CD4-positive, alpha-beta T cell (primary cell): ENCODE measurements at regions of chr1 and their contacts with region 1.

Region 1: DNA sequence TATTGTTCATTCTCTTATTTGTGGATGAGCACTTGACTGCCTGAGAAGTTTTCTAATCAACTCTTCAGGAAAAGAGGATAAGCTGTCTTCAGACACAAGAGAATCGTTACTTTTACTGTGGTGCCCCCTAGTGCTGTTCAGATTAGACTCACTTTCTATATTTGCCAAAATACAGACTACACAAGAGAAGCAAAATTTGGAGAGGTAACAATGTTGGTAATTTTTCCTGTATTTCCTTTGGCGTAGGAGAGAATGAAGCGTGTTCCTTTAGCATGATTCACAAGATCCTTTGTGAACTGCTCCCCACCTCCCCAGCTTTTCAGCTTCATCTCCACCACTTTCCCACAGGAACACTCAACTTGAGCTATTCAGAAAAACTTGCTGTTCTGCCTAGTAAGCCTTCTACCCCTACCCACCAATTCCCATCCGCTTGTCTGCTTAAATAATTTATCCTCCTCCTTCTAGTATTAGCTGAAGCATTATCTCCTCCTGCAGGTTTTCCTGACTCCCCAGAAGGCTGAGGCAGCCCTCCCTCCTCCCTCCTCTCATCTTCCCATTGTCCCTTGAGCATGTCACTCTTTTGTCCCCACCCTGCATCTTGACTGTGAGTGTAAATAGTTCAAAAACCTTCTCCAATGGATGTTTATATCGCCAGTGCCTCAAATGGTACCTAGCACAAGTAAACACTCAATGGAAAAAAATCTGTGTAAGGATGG is 4.5 kb downstream of the TNFSF4 start:
- DNase-seq: peak in 4 of 14 experiments; percentile 22 to 51 (median 45)
- ATAC-seq: no peak
- H3K4me3 ChIP-seq: no peak overlapping the region
- H3K4me3 Mint-ChIP-seq: no peak overlapping the region
- H3K27ac ChIP-seq: no peak overlapping the region
- H3K27ac Mint-ChIP-seq: peak overlapping the region; percentile 7
- H3K4me1 ChIP-seq: peaks cover 28% of the 10 kb centered on the region
- H3K4me1 Mint-ChIP-seq: peaks cover 47% of the 10 kb centered on the region
- H3K27me3 ChIP-seq: no peaks in the 10 kb centered on the region
- H3K27me3 Mint-ChIP-seq: no peaks in the 10 kb centered on the region
- CTCF ChIP-seq: peak; percentile 56

Region 2: DNA sequence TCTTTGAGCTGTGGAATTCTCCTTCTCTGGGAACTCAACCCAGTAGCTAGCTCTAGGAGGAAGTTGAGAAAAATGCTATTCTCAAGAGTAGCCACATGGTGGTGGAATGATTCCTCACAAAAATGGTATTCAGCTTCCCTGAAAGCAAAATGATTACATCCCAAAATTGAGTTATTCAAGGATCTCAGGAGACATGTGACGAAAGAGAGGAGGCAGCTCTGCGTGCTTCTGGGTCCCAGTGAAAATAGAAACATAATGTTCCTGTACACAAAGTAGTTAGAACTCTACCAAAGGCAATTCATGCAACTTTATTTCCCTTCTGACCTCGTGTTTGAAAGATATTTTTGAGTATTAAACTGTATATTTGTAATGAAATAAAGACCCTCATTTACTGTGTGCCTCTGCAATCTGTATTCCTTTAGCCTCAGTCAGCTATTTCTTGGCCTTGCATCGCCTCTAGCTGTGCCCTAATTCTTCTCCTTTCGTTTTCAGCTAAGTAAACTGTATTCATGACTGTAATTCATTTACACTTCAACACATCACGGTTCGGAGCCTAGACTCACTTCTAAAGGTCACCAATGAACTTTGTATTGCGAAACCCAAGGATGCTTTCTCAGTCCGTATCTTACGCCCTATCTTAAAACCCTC is 376.4 kb before region 1 on chr1:
- CTCF ChIA-PET with region 1: no interaction called
- POLR2A ChIA-PET with region 1: interaction called, 3 read pairs
- intact Hi-C with region 1: loop called (anchors 5 to 10 kb)
- DNase-seq: peak in 3 of 14 experiments; percentile 29 to 35 (median 34)
- ATAC-seq: no peak
- H3K4me3 ChIP-seq: no peak overlapping the region
- H3K4me3 Mint-ChIP-seq: no peak overlapping the region
- H3K27ac ChIP-seq: no peak overlapping the region
- H3K27ac Mint-ChIP-seq: no peak overlapping the region
- H3K4me1 ChIP-seq: no peaks in the 10 kb centered on the region
- H3K4me1 Mint-ChIP-seq: no peaks in the 10 kb centered on the region
- H3K27me3 ChIP-seq: no peaks in the 10 kb centered on the region
- H3K27me3 Mint-ChIP-seq: no peaks in the 10 kb centered on the region
- CTCF ChIP-seq: peak; percentile 63

Region 3: GRCh38 chr1:172837816-172838680 is 364.5 kb before region 1 on chr1:
- CTCF ChIA-PET with region 1: no interaction called
- POLR2A ChIA-PET with region 1: no interaction called
- intact Hi-C with region 1: loop called in 1 of 2 experiments (anchors 10 kb)
- DNase-seq: peak in 3 of 14 experiments; percentile 80 to 85 (median 84)
- ATAC-seq: peak; percentile 99
- H3K4me3 ChIP-seq: no peak overlapping the region
- H3K4me3 Mint-ChIP-seq: no peak overlapping the region
- H3K27ac ChIP-seq: peak overlapping the region in 1 of 2 donors; percentile 45
- H3K27ac Mint-ChIP-seq: peak overlapping the region; percentile 28
- H3K4me1 ChIP-seq: peaks cover 11% of the 10 kb centered on the region
- H3K4me1 Mint-ChIP-seq: peaks cover 19% of the 10 kb centered on the region
- H3K27me3 ChIP-seq: no peaks in the 10 kb centered on the region
- H3K27me3 Mint-ChIP-seq: no peaks in the 10 kb centered on the region
- CTCF ChIP-seq: no peak